BJ (cell line): ENCODE measurements at regions of chr20 and their contacts with region 1.

Region 1: GRCh38 chr20:18507218-18508021 is at the start of gene SEC23B:
- DNase-seq: peak; percentile 90
- H3K4me3 ChIP-seq: peak within 1 kb of the TSS; percentile 83
- H3K27me3 ChIP-seq: no peaks in the 10 kb centered on the region
- CTCF ChIP-seq: no peak
- polyA plus RNA-seq, gene SEC23B: 49.2 and 56.5 TPM in 2 replicates

Region 2: DNA sequence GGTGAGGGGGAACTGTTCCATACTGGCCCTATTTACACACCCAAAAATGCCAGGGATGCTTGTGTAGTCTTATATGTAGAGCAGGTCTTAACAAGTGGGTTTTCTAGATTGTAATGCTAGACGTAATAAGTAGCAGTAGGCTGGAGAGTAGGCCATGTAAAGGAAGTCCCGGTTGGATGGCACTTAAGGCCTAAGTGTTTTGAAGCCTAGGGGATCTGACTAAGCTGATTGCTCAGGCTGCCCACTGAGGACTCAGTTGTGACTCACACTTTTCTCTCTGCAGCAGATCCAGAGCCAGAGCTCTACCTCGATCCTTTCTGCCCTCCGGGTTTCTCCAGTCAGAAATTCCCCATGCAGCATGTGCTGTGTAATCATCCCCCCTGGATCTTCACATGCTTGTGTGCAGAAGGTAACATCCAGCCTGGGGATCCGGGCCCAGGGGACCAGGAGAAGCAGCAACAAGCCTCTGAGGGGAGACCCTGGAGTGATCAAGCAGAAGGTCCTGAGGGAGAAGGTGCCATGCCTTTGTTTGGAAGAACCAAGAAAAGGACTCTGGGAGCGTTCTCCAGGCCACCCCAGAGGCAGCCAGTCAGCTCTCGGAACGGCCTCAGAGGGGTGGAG is 192.5 kb before region 1 on chr20:
- CTCF ChIA-PET with region 1: no interaction called
- POLR2A ChIA-PET with region 1: no interaction called
- DNase-seq: peak; percentile 19
- H3K4me3 ChIP-seq: no peak overlapping the region
- H3K27me3 ChIP-seq: no peaks in the 10 kb centered on the region
- CTCF ChIP-seq: no peak

Region 3: DNA sequence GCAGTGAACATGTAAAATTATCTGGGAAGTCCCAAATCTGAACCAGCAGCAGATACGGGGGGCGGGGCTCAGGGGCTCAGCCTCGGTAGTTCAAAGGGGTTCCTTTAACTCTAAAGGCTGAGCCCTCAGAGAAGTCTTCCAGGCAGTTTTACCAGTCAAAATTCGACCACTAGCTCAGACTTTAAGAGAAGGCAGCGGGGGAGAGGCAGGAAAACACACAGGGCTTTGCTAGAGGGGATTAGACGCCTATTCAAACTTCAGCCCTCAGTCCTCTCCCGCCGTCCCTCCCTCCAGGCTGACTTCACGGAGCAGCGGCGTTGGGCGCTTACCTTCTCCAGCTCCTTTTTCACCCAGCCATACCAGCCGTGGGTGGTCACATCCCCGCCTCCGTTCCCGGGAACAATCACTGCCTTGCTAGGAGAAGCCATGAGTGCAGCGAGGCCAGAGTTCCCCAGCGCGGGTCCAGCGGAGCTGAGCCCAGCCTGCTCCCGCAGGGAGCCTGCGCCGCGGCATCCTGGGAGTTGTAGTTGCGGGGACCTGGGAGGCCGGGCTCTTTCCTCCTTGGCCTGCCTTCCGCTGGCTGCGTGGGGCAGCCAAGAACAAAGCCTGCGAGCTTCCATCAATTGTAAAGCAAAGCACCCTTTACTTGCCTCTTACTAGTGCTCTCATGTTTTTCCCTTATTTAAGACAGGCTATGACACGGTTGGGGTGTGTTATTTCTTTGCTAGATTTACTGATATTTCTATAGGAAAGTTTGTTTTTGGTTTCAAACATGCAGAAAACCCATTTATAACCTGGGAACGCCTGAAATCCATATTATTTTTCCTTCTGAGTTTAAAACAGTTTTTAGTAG is 10.5 kb before region 1 on chr20 and contains the start of gene RBBP9:
- CTCF ChIA-PET with region 1: interaction called, 11 read pairs
- POLR2A ChIA-PET with region 1: interaction called, 5 read pairs
- DNase-seq: peak; percentile 19
- H3K4me3 ChIP-seq: peak within 1 kb of the TSS; percentile 76
- H3K27me3 ChIP-seq: no peaks in the 10 kb centered on the region
- CTCF ChIP-seq: no peak
- polyA plus RNA-seq, gene RBBP9: 8.5 and 14.9 TPM in 2 replicates

Region 4: DNA sequence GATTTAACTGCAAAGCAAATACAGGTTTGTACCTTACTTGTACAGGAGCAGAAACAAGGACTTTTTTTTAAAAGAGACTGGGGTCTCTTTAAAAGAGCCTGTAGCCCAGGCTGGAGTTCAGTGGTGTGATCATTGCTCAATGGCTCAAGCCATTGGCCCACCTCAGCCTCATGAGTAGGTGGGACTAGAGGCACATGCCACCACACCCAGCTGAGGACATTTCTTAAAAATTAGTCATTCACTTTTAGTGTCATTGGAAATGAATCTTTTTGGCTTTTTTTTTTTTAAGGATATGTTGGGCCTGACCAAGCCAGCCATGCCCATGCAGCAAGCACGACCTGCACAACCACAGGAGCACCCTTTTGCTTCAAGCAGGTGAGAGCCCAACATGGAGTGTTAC is 17.2 kb after region 1 on chr20:
- CTCF ChIA-PET with region 1: no interaction called
- POLR2A ChIA-PET with region 1: no interaction called
- DNase-seq: peak; percentile 57
- H3K4me3 ChIP-seq: no peak overlapping the region
- H3K27me3 ChIP-seq: no peaks in the 10 kb centered on the region
- CTCF ChIP-seq: no peak

Region 5: GRCh38 chr20:18639501-18639979 is 132.1 kb after region 1 on chr20:
- CTCF ChIA-PET with region 1: no interaction called
- POLR2A ChIA-PET with region 1: no interaction called
- DNase-seq: no peak
- H3K4me3 ChIP-seq: no peak overlapping the region
- H3K27me3 ChIP-seq: no peaks in the 10 kb centered on the region
- CTCF ChIP-seq: no peak